Aorta (tissue), 5 donors: ENCODE measurements at regions of chr17 and their contacts with region 1.

Region 1: GRCh38 chr17:4074831-4075495 is 67.9 kb downstream of the ZZEF1 start:
- DNase-seq: no peak
- ATAC-seq: peak; percentile 66
- H3K4me3 ChIP-seq: no peak overlapping the region
- H3K27ac ChIP-seq: peak overlapping the region in 1 of 2 donors; percentile 37
- H3K4me1 ChIP-seq: peaks cover 0 to 4% of the 10 kb centered on the region in 2 donors
- H3K27me3 ChIP-seq: no peaks in the 10 kb centered on the region

Region 2: GRCh38 chr17:3865176-3865575 is 209.8 kb before region 1 on chr17:
- intact Hi-C with region 1: loop called in 1 of 2 experiments (anchors 5 kb)
- DNase-seq: peak; percentile 76 to 87
- ATAC-seq: peak; percentile 44
- H3K4me3 ChIP-seq: no peak overlapping the region
- H3K27ac ChIP-seq: no peak overlapping the region
- H3K4me1 ChIP-seq: no peaks in the 10 kb centered on the region
- H3K27me3 ChIP-seq: no peaks in the 10 kb centered on the region

Region 3: DNA sequence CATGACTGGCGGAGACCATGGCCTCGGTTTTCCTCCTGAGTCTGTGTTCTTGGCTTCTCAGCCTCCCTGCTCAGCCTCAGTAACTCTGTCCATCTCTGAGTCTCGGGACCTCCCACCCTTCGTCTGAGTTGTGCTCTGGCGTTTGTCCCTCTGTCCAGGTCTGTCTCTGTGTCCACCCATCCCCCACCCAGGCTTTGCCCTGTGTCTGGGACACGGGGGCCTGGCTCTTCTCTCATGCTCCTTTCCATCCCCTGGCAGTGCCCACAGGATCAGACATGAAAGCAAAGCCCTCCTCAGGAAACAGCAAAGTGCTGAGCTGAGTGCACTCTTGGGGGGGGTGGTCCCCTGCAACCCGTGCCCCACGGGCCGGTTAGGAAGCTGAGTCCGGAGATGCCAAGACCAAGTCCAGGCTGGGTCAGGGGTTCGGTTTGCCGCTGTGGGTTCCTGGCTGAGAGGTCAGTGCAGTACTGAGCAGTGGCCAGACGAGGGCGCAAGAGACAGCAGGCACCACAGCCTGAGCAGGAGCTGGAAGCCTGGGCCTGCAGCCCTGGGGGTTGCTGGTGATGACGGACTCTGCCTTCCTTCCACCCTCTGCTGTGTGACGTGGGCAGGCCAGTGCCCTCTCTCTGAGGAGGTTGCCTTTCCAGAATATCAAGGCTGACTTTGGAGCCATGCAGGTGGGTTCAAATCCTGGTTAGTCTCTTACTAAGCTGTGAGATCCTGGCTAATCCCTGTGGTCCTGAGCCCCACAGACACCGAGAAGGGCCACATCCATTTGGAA is 161.2 kb before region 1 on chr17:
- intact Hi-C with region 1: loop called (anchors 2 to 5 kb)
- DNase-seq: peak; percentile 90 to 95
- ATAC-seq: peak; percentile 88
- H3K4me3 ChIP-seq: no peak overlapping the region
- H3K27ac ChIP-seq: no peak overlapping the region
- H3K4me1 ChIP-seq: no peaks in the 10 kb centered on the region
- H3K27me3 ChIP-seq: no peaks in the 10 kb centered on the region